Dorsolateral prefrontal cortex (tissue), 120 donors: ENCODE measurements at regions of chr2 and their contacts with region 1.

Region 1: DNA sequence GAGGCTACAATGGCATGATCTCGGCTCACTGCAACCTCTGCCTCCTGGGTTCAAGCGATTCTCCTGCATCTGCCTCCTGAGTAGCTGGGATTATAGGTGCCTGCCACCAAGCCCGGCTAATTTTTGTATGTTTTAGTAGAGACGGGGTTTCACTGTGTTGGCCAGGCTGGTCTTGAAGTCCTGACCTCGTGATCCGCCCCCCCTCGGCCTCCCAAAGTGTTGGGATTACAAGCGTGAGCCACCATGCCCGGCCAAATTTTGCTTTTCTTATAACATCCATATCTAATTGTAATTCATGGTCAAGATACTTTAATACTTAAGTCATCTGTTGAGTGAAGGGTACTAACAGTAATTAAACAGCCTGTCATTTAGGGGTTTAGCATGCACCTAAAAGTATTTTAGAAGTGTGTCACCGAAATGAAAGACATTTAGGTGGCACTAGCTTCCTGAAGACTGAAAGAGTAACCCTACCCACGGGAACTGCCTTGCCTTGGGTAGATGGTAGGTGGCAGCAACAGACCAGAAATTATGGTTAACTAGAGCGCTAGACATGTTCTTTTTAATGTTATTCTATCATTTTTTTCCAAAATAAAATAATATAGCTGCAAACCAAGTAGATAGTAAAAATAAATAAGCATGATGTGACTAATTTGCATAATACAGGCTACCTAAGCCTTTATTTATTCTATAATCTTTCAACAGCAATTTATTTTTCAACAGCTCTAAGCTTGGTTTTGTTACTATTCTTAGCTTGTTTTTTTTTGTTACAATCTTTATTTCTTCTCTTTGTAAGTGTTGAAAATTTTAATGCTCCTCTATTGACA is 8.6 kb upstream of the ACYP2 start:
- DNase-seq: peak in 6 of 10 donors; percentile 37 to 66 (median 56)
- H3K4me3 ChIP-seq: peak overlapping the region in 26 of 59 donors; percentile 1 to 47 (median 32)
- H3K27ac ChIP-seq: peak overlapping the region in 46 of 59 donors; percentile 5 to 81 (median 54)
- H3K27me3 ChIP-seq: no peaks in the 10 kb centered on the region
- CTCF ChIP-seq: peak; percentile 19 to 94 (median 80)

Region 2: GRCh38 chr2:53896864-53897263 is 210.0 kb before region 1 on chr2:
- intact Hi-C with region 1: no loop called
- DNase-seq: no peak
- H3K4me3 ChIP-seq: no peak overlapping the region
- H3K27ac ChIP-seq: peak overlapping the region in 11 of 59 donors; percentile 0 to 40 (median 11)
- H3K27me3 ChIP-seq: no peaks in the 10 kb centered on the region
- CTCF ChIP-seq: no peak

Region 3: DNA sequence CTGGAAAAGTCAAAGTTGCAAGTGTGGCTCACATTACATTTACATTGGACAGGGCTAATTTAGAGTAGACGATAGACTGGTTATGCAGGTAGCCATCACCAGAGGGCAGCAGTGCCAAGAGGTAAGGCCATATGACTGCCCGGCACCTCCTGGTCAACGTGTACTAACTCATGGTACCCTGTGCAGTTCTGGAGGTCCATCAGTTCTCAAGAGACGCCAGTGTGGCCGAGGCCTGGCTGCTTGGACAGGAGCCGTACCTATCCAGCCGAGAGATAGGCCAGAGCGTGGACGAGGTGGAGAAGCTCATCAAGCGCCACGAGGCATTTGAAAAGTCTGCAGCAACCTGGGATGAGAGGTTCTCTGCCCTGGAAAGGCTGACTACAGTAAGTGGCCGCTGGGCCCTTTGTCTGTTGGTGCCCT is 550.8 kb after region 1 on chr2:
- intact Hi-C with region 1: loop called in 1 of 2 experiments (anchors 5 kb)
- DNase-seq: peak in 3 of 10 donors; percentile 58 to 66 (median 61)
- H3K4me3 ChIP-seq: no peak overlapping the region
- H3K27ac ChIP-seq: peak overlapping the region in 57 of 59 donors; percentile 18 to 90 (median 78)
- H3K27me3 ChIP-seq: no peaks in the 10 kb centered on the region
- CTCF ChIP-seq: peak in 55 of 56 donors; percentile 29 to 71 (median 55)

Region 4: DNA sequence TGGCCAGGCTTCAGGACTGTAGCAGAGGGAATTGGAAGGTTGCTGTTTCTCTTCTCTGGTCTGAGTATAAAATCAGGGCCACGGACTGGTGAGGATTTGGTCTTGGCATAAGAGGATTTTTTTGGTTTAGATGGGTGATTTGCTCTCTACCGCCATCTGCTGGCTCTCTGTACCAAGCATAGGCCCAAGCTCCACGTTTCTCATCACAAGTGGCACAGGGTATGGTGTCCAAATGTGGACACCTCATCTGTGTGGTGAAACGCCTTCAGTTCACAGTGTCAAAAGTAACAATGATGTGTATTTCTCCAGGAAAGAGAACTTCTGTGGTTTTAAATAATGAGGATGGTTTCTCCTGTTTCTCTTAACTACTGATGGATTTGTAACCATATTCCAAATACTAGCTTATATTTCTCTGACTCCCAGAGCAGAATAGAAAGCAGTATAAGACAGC is 731.8 kb after region 1 on chr2:
- intact Hi-C with region 1: loop called in 1 of 2 experiments (anchors 10 kb)
- DNase-seq: peak in 9 of 10 donors; percentile 28 to 80 (median 65)
- H3K4me3 ChIP-seq: peak overlapping the region in 1 of 59 donors; percentile 14
- H3K27ac ChIP-seq: peak overlapping the region in 46 of 59 donors; percentile 2 to 81 (median 50)
- H3K27me3 ChIP-seq: no peaks in the 10 kb centered on the region
- CTCF ChIP-seq: peak; percentile 75 to 97 (median 92)

Region 5: GRCh38 chr2:55213822-55214221 is 1107.0 kb after region 1 on chr2:
- intact Hi-C with region 1: no loop called
- DNase-seq: no peak
- H3K4me3 ChIP-seq: no peak overlapping the region
- H3K27ac ChIP-seq: no peak overlapping the region
- H3K27me3 ChIP-seq: no peaks in the 10 kb centered on the region
- CTCF ChIP-seq: no peak